ENCODE measurements at regions of chr2 and their contacts with region 1.

Region 1: GRCh38 chr2:33681369-33681757 is 82.3 kb upstream of the FAM98A start:
- DNase-seq: peak; percentile 7
- ATAC-seq: peak; percentile 94
- H3K4me3 ChIP-seq: no peak overlapping the region
- H3K27ac ChIP-seq: no peak overlapping the region
- H3K4me1 ChIP-seq: no peaks in the 10 kb centered on the region
- H3K27me3 ChIP-seq: no peaks in the 10 kb centered on the region
- CTCF ChIP-seq: peak; percentile 38
- POLR2A ChIP-seq: no peak
- RAD21 ChIP-seq: peak; percentile 41

Region 2: GRCh38 chr2:33670392-33670948 is 10.9 kb before region 1 on chr2:
- CTCF ChIA-PET with region 1: no interaction called
- POLR2A ChIA-PET with region 1: no interaction called
- dilution Hi-C with region 1: no loop called
- in situ Hi-C with region 1: no loop called
- intact Hi-C with region 1: no loop called
- DNase-seq: no peak
- ATAC-seq: no peak
- H3K4me3 ChIP-seq: no peak overlapping the region
- H3K27ac ChIP-seq: no peak overlapping the region
- H3K4me1 ChIP-seq: no peaks in the 10 kb centered on the region
- H3K27me3 ChIP-seq: no peaks in the 10 kb centered on the region
- CTCF ChIP-seq: no peak
- POLR2A ChIP-seq: no peak
- RAD21 ChIP-seq: no peak

Region 3: GRCh38 chr2:34096562-34097171 is 415.3 kb after region 1 on chr2:
- CTCF ChIA-PET with region 1: no interaction called
- POLR2A ChIA-PET with region 1: no interaction called
- dilution Hi-C with region 1: no loop called
- in situ Hi-C with region 1: no loop called
- intact Hi-C with region 1: loop called (anchors 1 kb)
- DNase-seq: peak; percentile 56
- ATAC-seq: peak; percentile 71
- H3K4me3 ChIP-seq: no peak overlapping the region
- H3K27ac ChIP-seq: no peak overlapping the region
- H3K4me1 ChIP-seq: no peaks in the 10 kb centered on the region
- H3K27me3 ChIP-seq: no peaks in the 10 kb centered on the region
- CTCF ChIP-seq: peak; percentile 77
- POLR2A ChIP-seq: no peak
- RAD21 ChIP-seq: peak; percentile 78

Measured in IMR-90 (cell line).